Activated B cell treated with CpG ODN at 0.5 μM for 24 hours (primary cell): ENCODE measurements at regions of chr6 and their contacts with region 1.

Region 1: GRCh38 chr6:31546962-31547726 is at the start of gene NFKBIL1:
- DNase-seq: peak; percentile 85
- ATAC-seq: peak; percentile 82
- H3K4me3 Mint-ChIP-seq: peak within 1 kb of the TSS; percentile 93
- H3K27ac Mint-ChIP-seq: peak within 1 kb of the TSS; percentile 97
- H3K4me1 Mint-ChIP-seq: peaks cover 53% of the 10 kb centered on the region
- H3K27me3 Mint-ChIP-seq: no peaks in the 10 kb centered on the region
- CTCF ChIP-seq: no peak
- total RNA-seq, gene NFKBIL1: 11.7 and 16.7 TPM in 2 replicates

Region 2: GRCh38 chr6:31559958-31560696 is 13.0 kb after region 1 on chr6:
- CTCF ChIA-PET with region 1: interaction called, 20 read pairs
- POLR2A ChIA-PET with region 1: interaction called, 32 read pairs
- intact Hi-C with region 1: loop called (anchors 1 kb)
- DNase-seq: peak; percentile 52
- ATAC-seq: peak; percentile 67
- H3K4me3 Mint-ChIP-seq: peak overlapping the region; percentile 83
- H3K27ac Mint-ChIP-seq: peak overlapping the region; percentile 94
- H3K4me1 Mint-ChIP-seq: peaks cover 90% of the 10 kb centered on the region
- H3K27me3 Mint-ChIP-seq: no peaks in the 10 kb centered on the region
- CTCF ChIP-seq: no peak

Region 3: GRCh38 chr6:31580807-31581433 is 33.8 kb after region 1 on chr6:
- CTCF ChIA-PET with region 1: interaction called, 611 read pairs
- POLR2A ChIA-PET with region 1: interaction called, 234 read pairs
- intact Hi-C with region 1: loop called (anchors 1 kb)
- DNase-seq: peak; percentile 94
- ATAC-seq: peak; percentile 71
- H3K4me3 Mint-ChIP-seq: peak overlapping the region; percentile 99
- H3K27ac Mint-ChIP-seq: peak overlapping the region; percentile 94
- H3K4me1 Mint-ChIP-seq: peaks cover 83% of the 10 kb centered on the region
- H3K27me3 Mint-ChIP-seq: no peaks in the 10 kb centered on the region
- CTCF ChIP-seq: peak; percentile 91

Region 4: GRCh38 chr6:31652925-31653718 is 106.0 kb after region 1 on chr6:
- CTCF ChIA-PET with region 1: interaction called, 4 read pairs
- POLR2A ChIA-PET with region 1: interaction called, 28 read pairs
- intact Hi-C with region 1: loop called (anchors 1 kb)
- DNase-seq: no peak
- ATAC-seq: peak; percentile 73
- H3K4me3 Mint-ChIP-seq: peak overlapping the region; percentile 94
- H3K27ac Mint-ChIP-seq: peak overlapping the region; percentile 100
- H3K4me1 Mint-ChIP-seq: peaks cover 55% of the 10 kb centered on the region
- H3K27me3 Mint-ChIP-seq: no peaks in the 10 kb centered on the region
- CTCF ChIP-seq: no peak

Region 5: GRCh38 chr6:31702819-31703522 is 155.8 kb after region 1 on chr6 and contains the start of gene ABHD16A:
- CTCF ChIA-PET with region 1: no interaction called
- POLR2A ChIA-PET with region 1: interaction called, 6 read pairs
- intact Hi-C with region 1: loop called (anchors 1 kb)
- DNase-seq: peak; percentile 94
- ATAC-seq: peak; percentile 93
- H3K4me3 Mint-ChIP-seq: peak within 1 kb of the TSS; percentile 99
- H3K27ac Mint-ChIP-seq: peak within 1 kb of the TSS; percentile 89
- H3K4me1 Mint-ChIP-seq: peaks cover 28% of the 10 kb centered on the region
- H3K27me3 Mint-ChIP-seq: no peaks in the 10 kb centered on the region
- CTCF ChIP-seq: no peak
- total RNA-seq, gene ABHD16A: 49.3 and 59.1 TPM in 2 replicates

Region 6: GRCh38 chr6:31827286-31828079 is 280.3 kb after region 1 on chr6 and contains the start of gene HSPA1B:
- CTCF ChIA-PET with region 1: interaction called, 18 read pairs
- POLR2A ChIA-PET with region 1: interaction called, 20 read pairs
- intact Hi-C with region 1: loop called (anchors 1 kb)
- DNase-seq: peak; percentile 70
- ATAC-seq: peak; percentile 76
- H3K4me3 Mint-ChIP-seq: peak within 1 kb of the TSS; percentile 91
- H3K27ac Mint-ChIP-seq: peak within 1 kb of the TSS; percentile 99
- H3K4me1 Mint-ChIP-seq: peaks cover 40% of the 10 kb centered on the region
- H3K27me3 Mint-ChIP-seq: no peaks in the 10 kb centered on the region
- CTCF ChIP-seq: no peak
- total RNA-seq, gene HSPA1B: 23.7 and 30.4 TPM in 2 replicates

Region 7: DNA sequence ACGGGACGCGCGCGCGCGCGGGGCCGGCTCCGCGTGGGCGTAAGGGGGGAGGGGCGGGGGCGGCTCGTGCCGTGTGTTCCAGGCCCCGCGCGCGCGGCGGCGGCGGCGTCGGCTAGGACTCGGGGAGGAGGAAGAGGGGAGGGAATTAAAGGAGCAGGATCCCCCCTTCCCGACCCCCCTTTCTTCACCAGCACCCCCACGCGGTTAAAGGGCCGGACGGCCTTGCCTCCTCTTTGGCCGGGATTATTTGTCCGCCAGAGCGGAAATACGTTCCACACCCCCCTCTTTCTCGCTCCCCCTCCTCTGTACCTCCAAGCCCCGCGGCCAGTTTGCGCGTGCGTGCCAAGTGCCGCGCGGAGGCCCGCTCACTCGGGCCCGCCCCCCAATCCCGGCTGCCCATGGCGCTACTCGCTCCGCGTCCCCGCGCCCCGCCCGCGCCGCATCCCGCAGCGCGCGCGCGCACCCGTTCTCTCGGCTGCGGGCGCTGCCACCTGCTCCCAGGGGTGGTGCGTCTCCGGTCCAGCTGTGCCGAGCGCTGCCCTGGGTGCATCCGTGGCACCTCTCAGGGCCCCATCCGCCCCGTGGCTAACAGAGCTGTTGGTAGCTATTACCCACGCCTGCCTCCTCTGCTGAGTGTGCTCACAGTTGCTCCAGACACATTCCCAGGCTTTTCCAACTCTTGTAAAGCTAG is 355.0 kb after region 1 on chr6 and contains the start of gene ZBTB12:
- CTCF ChIA-PET with region 1: no interaction called
- POLR2A ChIA-PET with region 1: interaction called, 6 read pairs
- intact Hi-C with region 1: loop called (anchors 2 kb)
- DNase-seq: peak; percentile 83
- ATAC-seq: peak; percentile 69
- H3K4me3 Mint-ChIP-seq: peak within 1 kb of the TSS; percentile 89
- H3K27ac Mint-ChIP-seq: peak within 1 kb of the TSS; percentile 86
- H3K4me1 Mint-ChIP-seq: peaks cover 27% of the 10 kb centered on the region
- H3K27me3 Mint-ChIP-seq: no peaks in the 10 kb centered on the region
- CTCF ChIP-seq: no peak
- total RNA-seq, gene ZBTB12: 4.8 and 5.5 TPM in 2 replicates